ENCODE measurements at regions of chr9 and their contacts with region 1.

Region 1: GRCh38 chr9:72280913-72281500 is 84.0 kb downstream of the ZFAND5 start:
- DNase-seq: peak; percentile 37 to 66 (median 58)
- ATAC-seq: peak; percentile 90
- H3K4me3 ChIP-seq: no peak overlapping the region
- H3K4me3 Mint-ChIP-seq: no peak overlapping the region
- H3K27ac ChIP-seq: no peak overlapping the region
- H3K27ac Mint-ChIP-seq: no peak overlapping the region
- H3K4me1 ChIP-seq: no peaks in the 10 kb centered on the region
- H3K4me1 Mint-ChIP-seq: peaks cover 0 to 3% (median 0%) of the 10 kb centered on the region in 7 donors
- H3K27me3 ChIP-seq: no peaks in the 10 kb centered on the region
- H3K27me3 Mint-ChIP-seq: peaks cover 0 to 12% (median 0%) of the 10 kb centered on the region in 5 donors

Region 2: GRCh38 chr9:72292256-72292682 is 11.3 kb after region 1 on chr9:
- CTCF ChIA-PET with region 1: interaction called, 55 read pairs
- POLR2A ChIA-PET with region 1: no interaction called
- intact Hi-C with region 1: no loop called
- DNase-seq: peak in 5 of 9 donors; percentile 12 to 35 (median 27)
- ATAC-seq: peak; percentile 60
- H3K4me3 ChIP-seq: no peak overlapping the region
- H3K4me3 Mint-ChIP-seq: no peak overlapping the region
- H3K27ac ChIP-seq: no peak overlapping the region
- H3K27ac Mint-ChIP-seq: no peak overlapping the region
- H3K4me1 ChIP-seq: no peaks in the 10 kb centered on the region
- H3K4me1 Mint-ChIP-seq: peaks cover 0 to 7% (median 0%) of the 10 kb centered on the region in 7 donors
- H3K27me3 ChIP-seq: no peaks in the 10 kb centered on the region
- H3K27me3 Mint-ChIP-seq: peaks cover 0 to 21% (median 6%) of the 10 kb centered on the region in 5 donors

Region 3: DNA sequence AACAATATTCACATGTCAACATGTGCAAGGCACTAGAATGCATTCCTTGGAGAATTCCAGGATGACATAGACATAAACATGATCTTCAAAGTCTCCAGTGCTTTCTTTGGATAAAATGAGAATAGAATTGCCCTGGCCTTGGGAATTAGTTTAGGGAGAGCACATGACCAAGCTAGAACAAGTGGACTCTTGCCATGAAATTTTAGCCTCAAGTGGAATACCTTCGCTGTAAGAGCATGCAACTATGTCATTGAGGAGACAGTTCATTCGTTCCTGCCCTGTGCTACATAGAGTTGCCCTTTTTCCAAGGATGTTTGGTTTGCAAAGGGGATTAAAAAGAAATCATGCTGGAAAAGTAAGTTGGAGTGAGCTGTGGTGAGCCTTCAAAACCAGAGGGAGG is 41.3 kb after region 1 on chr9:
- CTCF ChIA-PET with region 1: no interaction called
- POLR2A ChIA-PET with region 1: no interaction called
- intact Hi-C with region 1: no loop called
- DNase-seq: no peak
- ATAC-seq: no peak
- H3K4me3 ChIP-seq: no peak overlapping the region
- H3K4me3 Mint-ChIP-seq: no peak overlapping the region
- H3K27ac ChIP-seq: no peak overlapping the region
- H3K27ac Mint-ChIP-seq: no peak overlapping the region
- H3K4me1 ChIP-seq: no peaks in the 10 kb centered on the region
- H3K4me1 Mint-ChIP-seq: no peaks in the 10 kb centered on the region
- H3K27me3 ChIP-seq: no peaks in the 10 kb centered on the region
- H3K27me3 Mint-ChIP-seq: peaks cover 0 to 21% (median 0%) of the 10 kb centered on the region in 5 donors

Region 4: DNA sequence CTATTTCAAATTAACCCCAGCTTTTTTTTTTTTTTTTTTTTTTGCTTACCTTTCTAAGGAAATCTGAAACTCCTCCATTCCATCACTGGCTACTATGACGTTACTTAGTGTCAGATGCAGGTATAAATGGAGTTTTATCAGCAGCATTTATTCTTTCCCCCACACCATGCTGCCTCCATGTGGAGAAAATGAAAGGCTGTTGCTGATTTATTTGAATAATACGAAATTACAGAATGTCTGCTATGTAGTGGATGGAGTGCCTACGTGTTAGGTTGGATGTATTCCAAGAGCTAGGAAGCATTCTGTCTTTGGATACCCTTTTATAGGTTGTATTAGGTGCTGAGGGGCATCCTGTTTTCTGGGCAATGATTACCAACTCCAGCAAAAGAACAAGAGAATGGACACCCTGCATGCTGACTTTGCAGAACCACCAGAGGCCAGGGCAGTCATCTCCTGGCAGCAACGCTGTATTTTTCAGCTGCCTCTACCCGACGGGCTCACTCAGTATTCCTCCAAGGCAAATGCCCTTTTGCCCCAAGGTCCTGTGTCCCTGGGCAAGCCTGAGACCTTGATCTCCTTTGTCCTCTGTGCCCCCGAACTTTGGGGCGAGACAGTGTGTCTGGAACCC is 472.4 kb after region 1 on chr9:
- CTCF ChIA-PET with region 1: no interaction called
- POLR2A ChIA-PET with region 1: no interaction called
- intact Hi-C with region 1: loop called in 1 of 2 experiments (anchors 1 kb)
- DNase-seq: no peak
- ATAC-seq: no peak
- H3K4me3 ChIP-seq: no peak overlapping the region
- H3K4me3 Mint-ChIP-seq: no peak overlapping the region
- H3K27ac ChIP-seq: no peak overlapping the region
- H3K27ac Mint-ChIP-seq: no peak overlapping the region
- H3K4me1 ChIP-seq: no peaks in the 10 kb centered on the region
- H3K4me1 Mint-ChIP-seq: peaks cover 0 to 2% (median 0%) of the 10 kb centered on the region in 7 donors
- H3K27me3 ChIP-seq: peaks cover 0 to 3% of the 10 kb centered on the region in 2 donors
- H3K27me3 Mint-ChIP-seq: peaks cover 2 to 24% (median 20%) of the 10 kb centered on the region in 5 donors

Region 5: GRCh38 chr9:72827950-72828731 is 547.1 kb after region 1 on chr9:
- CTCF ChIA-PET with region 1: no interaction called
- POLR2A ChIA-PET with region 1: no interaction called
- intact Hi-C with region 1: loop called in 1 of 2 experiments (anchors 2 kb)
- DNase-seq: no peak
- ATAC-seq: no peak
- H3K4me3 ChIP-seq: no peak overlapping the region
- H3K4me3 Mint-ChIP-seq: no peak overlapping the region
- H3K27ac ChIP-seq: no peak overlapping the region
- H3K27ac Mint-ChIP-seq: no peak overlapping the region
- H3K4me1 ChIP-seq: no peaks in the 10 kb centered on the region
- H3K4me1 Mint-ChIP-seq: no peaks in the 10 kb centered on the region
- H3K27me3 ChIP-seq: no peaks in the 10 kb centered on the region
- H3K27me3 Mint-ChIP-seq: peaks cover 4 to 17% (median 6%) of the 10 kb centered on the region in 5 donors

Region 6: DNA sequence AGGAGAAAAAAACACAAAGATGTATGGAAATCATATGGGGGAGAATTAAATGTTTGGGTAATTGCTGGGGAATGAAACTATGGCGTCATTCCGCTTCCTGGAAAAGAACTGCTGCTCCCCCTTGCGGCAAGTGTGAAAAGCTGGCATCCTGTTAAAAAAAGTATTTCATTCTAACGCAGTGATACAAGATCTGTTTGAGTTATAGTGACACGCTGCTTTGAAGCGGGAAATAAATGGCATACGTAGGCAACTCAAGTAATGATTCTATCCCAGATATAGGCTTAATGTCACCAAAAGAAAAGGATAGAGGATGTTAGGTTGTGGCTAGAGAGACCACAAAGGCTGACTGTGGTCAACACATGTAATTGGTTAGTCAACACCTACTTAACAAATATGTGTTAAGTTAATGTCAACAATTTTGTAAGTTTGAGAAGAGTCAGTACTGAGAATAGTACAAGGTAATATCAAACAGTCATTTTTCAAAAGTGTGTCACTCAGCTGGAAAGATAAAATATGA is 742.1 kb after region 1 on chr9:
- CTCF ChIA-PET with region 1: interaction called, 12 read pairs
- POLR2A ChIA-PET with region 1: no interaction called
- intact Hi-C with region 1: loop called (anchors 1 kb)
- DNase-seq: peak in 5 of 9 donors; percentile 5 to 27 (median 19)
- ATAC-seq: peak; percentile 55
- H3K4me3 ChIP-seq: no peak overlapping the region
- H3K4me3 Mint-ChIP-seq: no peak overlapping the region
- H3K27ac ChIP-seq: no peak overlapping the region
- H3K27ac Mint-ChIP-seq: no peak overlapping the region
- H3K4me1 ChIP-seq: no peaks in the 10 kb centered on the region
- H3K4me1 Mint-ChIP-seq: peaks cover 0 to 10% (median 7%) of the 10 kb centered on the region in 7 donors
- H3K27me3 ChIP-seq: no peaks in the 10 kb centered on the region
- H3K27me3 Mint-ChIP-seq: peaks cover 16 to 36% (median 26%) of the 10 kb centered on the region in 5 donors

Region 7: GRCh38 chr9:73081979-73082657 is 801.1 kb after region 1 on chr9:
- CTCF ChIA-PET with region 1: interaction called, 5 read pairs
- POLR2A ChIA-PET with region 1: no interaction called
- intact Hi-C with region 1: loop called (anchors 1 to 5 kb)
- DNase-seq: peak in 4 of 9 donors; percentile 8 to 20 (median 15)
- ATAC-seq: peak; percentile 57
- H3K4me3 ChIP-seq: no peak overlapping the region
- H3K4me3 Mint-ChIP-seq: no peak overlapping the region
- H3K27ac ChIP-seq: no peak overlapping the region
- H3K27ac Mint-ChIP-seq: no peak overlapping the region
- H3K4me1 ChIP-seq: no peaks in the 10 kb centered on the region
- H3K4me1 Mint-ChIP-seq: no peaks in the 10 kb centered on the region
- H3K27me3 ChIP-seq: no peaks in the 10 kb centered on the region
- H3K27me3 Mint-ChIP-seq: peaks cover 8 to 31% (median 18%) of the 10 kb centered on the region in 5 donors